ENCODE measurements at regions of chr18 and their contacts with region 1.

Region 1: DNA sequence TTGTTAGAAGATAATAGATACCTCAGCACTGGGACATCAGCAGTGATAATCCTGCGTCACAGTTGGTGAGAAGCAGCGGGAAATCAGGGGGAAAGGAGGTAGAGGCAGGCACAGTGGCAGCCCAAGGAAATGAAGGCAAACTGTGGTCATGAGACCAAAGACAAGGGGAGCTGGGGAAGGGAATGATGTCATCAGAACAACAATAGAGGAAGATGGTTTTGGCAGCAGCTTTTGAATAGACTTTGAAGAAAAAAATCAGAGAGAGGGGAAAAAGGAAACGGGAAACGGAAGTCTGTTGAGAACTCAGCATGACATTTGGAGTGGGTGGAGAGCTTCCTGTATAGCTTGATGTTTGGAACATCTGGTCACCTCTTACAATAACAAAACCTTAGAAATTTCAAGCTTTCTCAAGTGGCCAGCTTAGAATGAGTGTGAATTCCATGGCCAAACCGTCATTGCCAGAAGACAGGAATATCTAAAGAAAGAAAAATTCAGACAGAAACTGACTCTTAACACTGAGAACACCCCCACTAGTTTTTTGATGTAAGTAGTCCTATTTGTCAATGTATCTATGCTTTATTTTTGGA is 18.4 kb upstream of the YES1 start:
- DNase-seq: peak; percentile 27
- H3K4me3 Mint-ChIP-seq: peak overlapping the region; percentile 22
- H3K27ac Mint-ChIP-seq: peak overlapping the region; percentile 66
- H3K4me1 Mint-ChIP-seq: peaks cover 21% of the 10 kb centered on the region
- H3K27me3 Mint-ChIP-seq: peaks cover 6% of the 10 kb centered on the region

Region 2: GRCh38 chr18:493986-494983 is 336.1 kb before region 1 on chr18:
- CTCF ChIA-PET with region 1: no interaction called
- POLR2A ChIA-PET with region 1: no interaction called
- DNase-seq: no peak
- H3K4me3 Mint-ChIP-seq: no peak overlapping the region
- H3K27ac Mint-ChIP-seq: no peak overlapping the region
- H3K4me1 Mint-ChIP-seq: no peaks in the 10 kb centered on the region
- H3K27me3 Mint-ChIP-seq: peaks cover 21% of the 10 kb centered on the region

Region 3: DNA sequence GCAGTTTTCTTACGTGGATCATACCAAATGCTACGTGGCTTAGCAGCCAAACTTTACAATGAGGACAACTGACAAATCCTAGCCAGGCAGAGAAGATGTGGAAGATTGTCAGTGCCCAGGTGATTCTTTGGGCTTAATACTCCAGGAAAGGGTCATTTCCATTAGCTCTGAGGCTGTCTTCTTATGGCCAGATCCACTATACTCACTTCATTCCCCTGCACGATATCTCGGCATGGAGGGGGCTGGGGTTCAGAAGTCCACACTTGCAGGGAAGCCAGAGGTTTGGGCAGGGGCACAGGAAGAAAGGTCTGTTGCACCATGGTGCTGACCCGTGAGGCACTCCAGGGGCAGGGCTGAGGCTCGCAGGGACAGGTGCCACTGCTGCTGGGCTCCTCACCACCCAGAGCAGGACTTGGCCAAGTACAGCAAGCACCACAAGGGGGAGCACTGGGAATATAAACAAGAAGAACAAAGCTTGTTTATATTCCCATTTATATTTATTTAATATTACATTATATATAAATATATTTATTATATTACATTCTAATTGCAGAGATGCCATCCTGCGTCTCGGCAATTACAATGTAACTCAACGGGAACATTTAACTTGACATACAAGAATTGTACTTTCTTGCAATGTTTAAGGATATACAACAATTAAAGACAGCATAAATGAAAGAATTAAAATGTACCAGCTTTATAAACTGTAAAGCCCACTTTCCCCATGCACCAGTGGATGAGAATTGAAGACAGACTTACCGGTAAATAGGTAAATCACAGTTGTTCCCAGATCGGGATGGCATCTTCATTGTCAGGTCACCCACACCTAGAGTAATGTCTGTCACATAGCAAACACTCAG is 206.4 kb before region 1 on chr18:
- CTCF ChIA-PET with region 1: interaction called, 78 read pairs
- POLR2A ChIA-PET with region 1: no interaction called
- DNase-seq: peak; percentile 69
- H3K4me3 Mint-ChIP-seq: no peak overlapping the region
- H3K27ac Mint-ChIP-seq: no peak overlapping the region
- H3K4me1 Mint-ChIP-seq: no peaks in the 10 kb centered on the region
- H3K27me3 Mint-ChIP-seq: peaks cover 37% of the 10 kb centered on the region

Region 4: DNA sequence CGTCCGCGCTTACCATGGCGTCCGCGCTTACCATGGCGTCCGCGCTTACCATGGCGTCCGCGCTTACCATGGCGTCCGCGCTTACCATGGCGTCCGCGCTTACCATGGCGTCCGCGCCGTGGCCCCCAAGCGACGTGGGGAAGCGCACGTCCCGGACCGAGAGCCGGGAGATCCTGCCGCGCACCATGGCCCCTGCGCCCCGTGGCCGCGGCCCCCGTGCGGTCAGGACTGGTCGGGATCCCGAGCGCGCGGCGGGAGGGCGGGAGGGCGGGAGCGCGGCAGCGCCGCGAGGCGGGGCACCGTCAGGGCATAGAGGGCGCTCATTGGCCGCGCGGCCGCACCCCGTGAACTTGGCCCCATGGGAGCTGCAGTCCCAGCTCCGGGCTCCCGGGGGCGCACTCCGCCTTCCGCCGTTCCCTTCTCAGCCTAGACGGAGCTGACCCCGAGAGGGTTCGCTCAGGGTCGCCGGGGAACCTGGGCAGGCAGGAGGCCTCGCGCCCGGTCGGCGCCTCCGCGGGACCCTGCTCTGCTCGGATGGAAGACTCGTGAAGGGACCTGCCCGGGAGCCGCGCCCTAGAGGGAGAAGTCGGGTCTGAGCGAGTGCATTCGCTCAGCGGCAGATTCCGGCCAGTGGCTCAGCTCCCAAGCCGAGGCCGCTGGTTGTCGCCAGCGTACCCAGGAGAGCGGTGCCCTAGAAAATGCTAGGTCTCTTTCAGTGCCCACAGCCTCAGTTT is 117.8 kb before region 1 on chr18 and contains the start of gene ENOSF1:
- CTCF ChIA-PET with region 1: interaction called, 82 read pairs
- POLR2A ChIA-PET with region 1: interaction called, 13 read pairs
- DNase-seq: peak; percentile 90
- H3K4me3 Mint-ChIP-seq: peak within 1 kb of the TSS; percentile 86
- H3K27ac Mint-ChIP-seq: peak within 1 kb of the TSS; percentile 90
- H3K4me1 Mint-ChIP-seq: peaks cover 61% of the 10 kb centered on the region
- H3K27me3 Mint-ChIP-seq: no peaks in the 10 kb centered on the region
- total RNA-seq, gene ENOSF1: 65.3 to 67.1 TPM

Region 5: GRCh38 chr18:741931-742512 is 88.4 kb before region 1 on chr18:
- CTCF ChIA-PET with region 1: interaction called, 173 read pairs
- POLR2A ChIA-PET with region 1: interaction called, 13 read pairs
- DNase-seq: no peak
- H3K4me3 Mint-ChIP-seq: no peak overlapping the region
- H3K27ac Mint-ChIP-seq: no peak overlapping the region
- H3K4me1 Mint-ChIP-seq: peaks cover 6% of the 10 kb centered on the region
- H3K27me3 Mint-ChIP-seq: no peaks in the 10 kb centered on the region

Region 6: GRCh38 chr18:805008-805754 is 25.2 kb before region 1 on chr18:
- CTCF ChIA-PET with region 1: interaction called, 30 read pairs
- POLR2A ChIA-PET with region 1: interaction called, 76 read pairs
- DNase-seq: no peak
- H3K4me3 Mint-ChIP-seq: peak overlapping the region; percentile 40
- H3K27ac Mint-ChIP-seq: peak overlapping the region; percentile 42
- H3K4me1 Mint-ChIP-seq: peaks cover 54% of the 10 kb centered on the region
- H3K27me3 Mint-ChIP-seq: no peaks in the 10 kb centered on the region

Region 7: GRCh38 chr18:812376-813171 is 17.8 kb before region 1 on chr18:
- CTCF ChIA-PET with region 1: interaction called, 59 read pairs
- POLR2A ChIA-PET with region 1: interaction called, 76 read pairs
- DNase-seq: peak; percentile 83
- H3K4me3 Mint-ChIP-seq: peak overlapping the region; percentile 83
- H3K27ac Mint-ChIP-seq: peak overlapping the region; percentile 99
- H3K4me1 Mint-ChIP-seq: peaks cover 72% of the 10 kb centered on the region
- H3K27me3 Mint-ChIP-seq: peaks cover 3% of the 10 kb centered on the region

Measured in activated CD4-positive, alpha-beta memory T cell treated with anti-CD3 and anti-CD28 coated beads, Interleukin-2, amount 10 ng/mL, durations not matched to agents 7 days and 5 days (primary cell).